IMR-90 (cell line): ENCODE measurements at regions of chr13 and their contacts with region 1.

Region 1: GRCh38 chr13:32159137-32159869 is 127.7 kb downstream of the FRY start:
- DNase-seq: peak; percentile 45
- ATAC-seq: peak; percentile 80
- H3K4me3 ChIP-seq: no peak overlapping the region
- H3K27ac ChIP-seq: peak overlapping the region; percentile 79; the same call in 1 of the 2 replicates
- H3K4me1 ChIP-seq: peaks cover 9% of the 10 kb centered on the region
- H3K27me3 ChIP-seq: no peaks in the 10 kb centered on the region
- CTCF ChIP-seq: no peak
- POLR2A ChIP-seq: no peak
- RAD21 ChIP-seq: no peak

Region 2: GRCh38 chr13:31898378-31899071 is 260.8 kb before region 1 on chr13:
- CTCF ChIA-PET with region 1: no interaction called
- POLR2A ChIA-PET with region 1: no interaction called
- dilution Hi-C with region 1: no loop called
- in situ Hi-C with region 1: no loop called
- intact Hi-C with region 1: no loop called
- DNase-seq: no peak
- ATAC-seq: no peak
- H3K4me3 ChIP-seq: no peak overlapping the region
- H3K27ac ChIP-seq: no peak overlapping the region
- H3K4me1 ChIP-seq: peaks cover 2% of the 10 kb centered on the region; the same call in 1 of the 2 replicates
- H3K27me3 ChIP-seq: peaks cover 9% of the 10 kb centered on the region
- CTCF ChIP-seq: no peak
- POLR2A ChIP-seq: no peak
- RAD21 ChIP-seq: no peak

Region 3: DNA sequence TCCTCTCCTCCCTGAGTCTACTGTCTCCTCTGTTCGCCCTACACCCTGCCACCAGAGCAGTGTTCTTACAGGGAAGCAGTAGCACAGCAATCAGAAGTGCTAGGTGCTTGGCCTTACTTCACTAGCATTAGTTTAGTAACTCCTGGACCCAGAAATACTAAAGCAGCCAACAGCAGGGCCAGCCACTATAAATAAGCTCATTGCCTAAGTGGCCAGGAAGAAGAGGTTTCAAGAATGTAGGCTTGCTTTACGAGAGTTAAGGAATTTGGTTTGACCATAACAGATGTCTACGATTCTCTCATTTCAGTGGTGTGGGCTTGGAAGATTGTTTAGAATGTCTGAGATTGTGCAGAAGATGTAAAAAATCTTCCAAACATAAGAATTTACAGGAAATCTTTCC is 52.5 kb after region 1 on chr13:
- CTCF ChIA-PET with region 1: no interaction called
- POLR2A ChIA-PET with region 1: interaction called, 10 read pairs
- dilution Hi-C with region 1: no loop called
- in situ Hi-C with region 1: no loop called
- intact Hi-C with region 1: no loop called
- DNase-seq: peak; percentile 95
- ATAC-seq: peak; percentile 84
- H3K4me3 ChIP-seq: no peak overlapping the region
- H3K27ac ChIP-seq: peak overlapping the region; percentile 82
- H3K4me1 ChIP-seq: peaks cover 25% of the 10 kb centered on the region
- H3K27me3 ChIP-seq: no peaks in the 10 kb centered on the region
- CTCF ChIP-seq: no peak
- POLR2A ChIP-seq: no peak
- RAD21 ChIP-seq: no peak

Region 4: DNA sequence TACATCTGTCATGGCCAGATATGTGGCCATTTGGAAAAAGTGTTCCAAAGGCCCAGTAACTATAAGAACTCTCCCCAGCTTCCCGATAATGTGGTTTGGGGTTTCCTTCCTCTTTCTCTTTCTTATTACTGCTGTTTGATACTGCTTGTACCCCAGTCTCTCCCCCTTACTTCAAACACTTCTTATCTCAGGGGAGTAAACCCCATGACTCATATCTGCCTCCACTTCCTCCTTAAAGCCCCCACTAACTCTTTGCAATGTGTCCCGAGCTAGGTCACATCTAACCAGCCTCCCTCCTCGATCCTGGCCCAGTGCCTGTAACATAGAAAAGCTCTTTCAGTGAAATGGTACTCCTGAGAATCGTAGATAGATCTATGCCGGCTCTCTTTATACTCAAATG is 1208.6 kb after region 1 on chr13:
- CTCF ChIA-PET with region 1: no interaction called
- POLR2A ChIA-PET with region 1: no interaction called
- dilution Hi-C with region 1: no loop called
- in situ Hi-C with region 1: no loop called
- intact Hi-C with region 1: no loop called
- DNase-seq: no peak
- ATAC-seq: no peak
- H3K4me3 ChIP-seq: no peak overlapping the region
- H3K27ac ChIP-seq: no peak overlapping the region
- H3K4me1 ChIP-seq: no peaks in the 10 kb centered on the region
- H3K27me3 ChIP-seq: no peaks in the 10 kb centered on the region
- CTCF ChIP-seq: no peak
- POLR2A ChIP-seq: no peak
- RAD21 ChIP-seq: no peak